IMR-90 (cell line): ENCODE measurements at regions of chr17 and their contacts with region 1.

Region 1: DNA sequence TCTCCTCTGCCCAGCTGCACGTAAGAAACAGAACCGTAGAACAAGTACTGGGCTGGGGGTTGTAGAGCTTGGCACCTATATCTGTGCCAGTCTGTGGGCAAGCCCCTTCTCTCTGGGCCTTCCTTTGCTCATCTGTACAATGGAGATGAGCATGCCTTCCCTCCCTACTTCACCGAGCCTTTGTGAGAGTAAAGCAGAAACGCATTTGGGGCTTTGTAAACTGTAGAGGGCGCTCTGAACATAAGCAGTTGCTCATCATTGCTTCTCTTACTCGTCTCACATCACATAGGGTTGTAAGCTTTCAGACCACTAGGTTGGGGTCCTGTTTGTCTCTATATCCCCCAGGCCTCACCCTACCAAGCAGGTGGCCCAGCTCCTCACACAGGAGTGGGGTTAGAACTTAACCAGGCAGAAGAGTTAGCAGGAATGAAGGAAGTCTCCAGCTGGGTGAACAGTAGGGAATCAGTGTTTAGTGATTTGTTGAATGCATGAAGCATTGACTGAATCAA is 15.1 kb downstream of the SAMD14 start:
- DNase-seq: peak; percentile 70
- ATAC-seq: peak; percentile 50
- H3K4me3 ChIP-seq: no peak overlapping the region
- H3K27ac ChIP-seq: no peak overlapping the region
- H3K4me1 ChIP-seq: peaks cover 3% of the 10 kb centered on the region
- H3K27me3 ChIP-seq: no peaks in the 10 kb centered on the region
- CTCF ChIP-seq: peak; percentile 64
- POLR2A ChIP-seq: no peak
- RAD21 ChIP-seq: peak; percentile 68

Region 2: DNA sequence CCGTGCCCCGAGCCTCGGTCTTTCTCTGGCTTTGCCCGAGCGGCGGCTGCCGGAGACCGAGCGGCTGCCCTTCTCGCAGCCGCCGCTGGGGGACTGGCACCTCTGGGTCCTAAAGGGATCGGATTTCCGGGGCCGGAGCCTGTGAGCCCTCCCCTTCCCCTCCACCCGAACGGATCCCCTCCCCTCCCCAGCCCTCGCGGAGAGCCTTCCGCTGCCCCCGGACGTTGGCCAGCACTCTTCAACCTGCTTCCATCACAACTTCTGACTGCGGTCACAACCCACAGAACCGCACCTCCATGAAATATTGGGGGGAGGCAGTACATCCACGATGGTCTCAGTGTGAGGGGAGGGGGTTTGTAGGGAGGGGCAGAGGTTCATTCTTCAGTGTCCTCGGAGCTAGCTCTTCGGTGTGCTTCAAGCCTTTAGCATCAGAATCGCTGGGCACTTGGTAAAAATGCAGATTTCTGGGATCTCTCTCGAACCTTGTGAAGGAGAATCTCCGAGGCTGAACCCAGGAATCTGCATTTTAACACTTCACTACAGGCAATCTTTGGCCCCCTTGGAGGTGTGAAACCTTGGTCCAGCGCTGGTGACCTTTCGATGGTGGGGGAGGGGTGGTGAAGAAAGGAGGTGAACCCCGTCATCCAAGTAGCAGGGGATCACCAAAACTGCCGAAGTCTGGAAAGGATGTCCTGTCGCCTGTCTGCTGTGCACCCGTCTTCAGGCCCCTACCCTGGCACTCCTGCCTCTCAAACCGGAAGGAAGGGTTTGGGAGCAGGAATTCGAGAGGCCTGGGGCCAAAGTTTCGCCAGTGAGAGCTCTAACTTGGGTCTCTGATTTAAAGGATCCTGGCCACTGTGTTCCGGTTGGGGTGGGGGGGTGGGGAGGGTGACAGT is 36.4 kb after region 1 on chr17:
- CTCF ChIA-PET with region 1: no interaction called
- POLR2A ChIA-PET with region 1: no interaction called
- dilution Hi-C with region 1: no loop called
- in situ Hi-C with region 1: no loop called
- intact Hi-C with region 1: loop called (anchors 1 kb)
- DNase-seq: peak; percentile 89
- ATAC-seq: peak; percentile 71
- H3K4me3 ChIP-seq: peak overlapping the region; percentile 86
- H3K27ac ChIP-seq: peak overlapping the region; percentile 97
- H3K4me1 ChIP-seq: peaks cover 24% of the 10 kb centered on the region
- H3K27me3 ChIP-seq: no peaks in the 10 kb centered on the region
- CTCF ChIP-seq: peak; percentile 75
- POLR2A ChIP-seq: 0 out of 2 replicates have a peak, but pooled peaks have one; percentile 24
- RAD21 ChIP-seq: no peak

Region 3: DNA sequence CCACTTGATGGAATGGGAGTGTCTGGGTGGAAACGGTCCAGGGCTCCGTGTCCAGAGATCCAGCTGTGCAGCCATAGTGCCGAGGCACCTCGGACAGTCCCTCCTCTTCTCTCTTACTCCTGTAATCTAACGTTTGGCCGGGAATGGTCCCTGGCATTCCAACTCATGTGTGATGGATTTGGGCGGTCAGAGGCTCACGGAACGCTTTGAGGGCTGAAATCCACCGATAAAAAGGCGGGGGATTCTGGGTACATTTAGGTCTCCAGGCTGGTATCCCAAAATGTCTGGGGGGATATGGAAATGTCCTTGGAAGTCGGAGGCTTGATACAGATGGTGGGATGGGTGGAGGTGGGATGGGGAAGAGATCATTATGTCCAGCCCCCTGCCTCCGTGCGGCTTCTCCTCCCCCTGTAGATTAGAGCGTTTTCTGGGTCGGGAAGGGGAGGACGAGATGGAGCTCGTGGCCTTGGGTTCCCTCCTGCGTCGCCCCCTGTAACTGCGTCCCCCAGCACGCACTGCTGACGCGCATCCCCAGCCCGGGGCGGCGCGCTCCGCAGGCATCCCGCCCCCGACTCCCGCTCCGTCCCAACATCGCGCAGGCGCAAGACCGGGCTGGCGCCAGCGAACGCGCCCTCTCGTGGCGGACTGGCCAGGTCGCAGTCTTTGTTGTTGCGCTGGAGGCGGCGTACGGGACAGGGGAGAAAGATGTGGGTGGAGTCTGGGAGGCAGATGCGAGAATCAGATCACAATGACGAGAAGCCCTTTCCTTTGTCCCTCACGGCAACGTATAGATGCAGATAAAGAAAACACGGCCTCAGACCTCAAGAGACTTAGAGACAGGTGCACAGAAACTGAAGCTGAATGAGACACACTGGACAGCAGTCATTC is 46.4 kb after region 1 on chr17:
- CTCF ChIA-PET with region 1: interaction called, 10 read pairs
- POLR2A ChIA-PET with region 1: no interaction called
- dilution Hi-C with region 1: no loop called
- in situ Hi-C with region 1: no loop called
- intact Hi-C with region 1: loop called (anchors 1 kb)
- DNase-seq: peak; percentile 90
- ATAC-seq: peak; percentile 96
- H3K4me3 ChIP-seq: peak overlapping the region; percentile 61
- H3K27ac ChIP-seq: peak overlapping the region; percentile 46
- H3K4me1 ChIP-seq: peaks cover 5% of the 10 kb centered on the region; the same call in 1 of the 2 replicates
- H3K27me3 ChIP-seq: no peaks in the 10 kb centered on the region
- CTCF ChIP-seq: peak; percentile 97
- POLR2A ChIP-seq: peak; percentile 58
- RAD21 ChIP-seq: peak; percentile 72